Calu3 (cell line): ENCODE measurements at regions of chr17 and their contacts with region 1.

Region 1: GRCh38 chr17:39461113-39461925 is at the start of gene CDK12:
- DNase-seq: peak; percentile 100
- H3K4me3 Mint-ChIP-seq: peak within 1 kb of the TSS; percentile 79
- H3K27ac Mint-ChIP-seq: peak within 1 kb of the TSS; percentile 92
- H3K4me1 Mint-ChIP-seq: peaks cover 20% of the 10 kb centered on the region
- H3K27me3 Mint-ChIP-seq: no peaks in the 10 kb centered on the region
- CTCF ChIP-seq: no peak
- total RNA-seq, gene CDK12: 321 and 329 TPM in 2 replicates

Region 2: GRCh38 chr17:38809828-38810227 is 651.5 kb before region 1 on chr17:
- CTCF ChIA-PET with region 1: no interaction called
- intact Hi-C with region 1: no loop called
- DNase-seq: no peak
- H3K4me3 Mint-ChIP-seq: no peak overlapping the region
- H3K27ac Mint-ChIP-seq: no peak overlapping the region
- H3K4me1 Mint-ChIP-seq: no peaks in the 10 kb centered on the region
- H3K27me3 Mint-ChIP-seq: no peaks in the 10 kb centered on the region
- CTCF ChIP-seq: no peak

Region 3: DNA sequence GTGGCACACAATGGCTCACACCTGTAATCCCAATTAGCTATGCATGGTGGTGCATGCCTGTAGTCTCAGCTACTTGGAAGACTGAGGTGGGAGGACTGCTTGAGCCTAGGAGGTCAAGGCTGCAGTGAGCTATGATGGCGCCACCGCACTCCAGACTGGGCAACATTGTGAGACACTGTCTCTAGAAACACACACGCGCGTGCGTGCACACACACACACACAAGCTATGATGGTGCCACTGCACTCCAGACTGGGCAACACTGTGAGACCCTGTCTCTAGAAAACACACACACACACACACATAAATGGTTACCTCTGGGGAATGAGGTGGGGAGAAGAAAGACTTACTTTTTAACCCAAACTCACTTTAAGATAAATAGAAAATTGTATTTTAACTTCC is 76.3 kb before region 1 on chr17:
- CTCF ChIA-PET with region 1: no interaction called
- intact Hi-C with region 1: no loop called
- DNase-seq: no peak
- H3K4me3 Mint-ChIP-seq: no peak overlapping the region
- H3K27ac Mint-ChIP-seq: no peak overlapping the region
- H3K4me1 Mint-ChIP-seq: no peaks in the 10 kb centered on the region
- H3K27me3 Mint-ChIP-seq: no peaks in the 10 kb centered on the region
- CTCF ChIP-seq: no peak

Region 4: GRCh38 chr17:39401412-39402243 is 59.7 kb before region 1 on chr17 and contains the start of gene FBXL20:
- CTCF ChIA-PET with region 1: interaction called, 25 read pairs
- intact Hi-C with region 1: no loop called
- DNase-seq: peak; percentile 100
- H3K4me3 Mint-ChIP-seq: peak within 1 kb of the TSS; percentile 89
- H3K27ac Mint-ChIP-seq: peak within 1 kb of the TSS; percentile 98
- H3K4me1 Mint-ChIP-seq: peaks cover 40% of the 10 kb centered on the region
- H3K27me3 Mint-ChIP-seq: no peaks in the 10 kb centered on the region
- CTCF ChIP-seq: no peak
- total RNA-seq, gene FBXL20: 70.3 and 71.5 TPM in 2 replicates

Region 5: DNA sequence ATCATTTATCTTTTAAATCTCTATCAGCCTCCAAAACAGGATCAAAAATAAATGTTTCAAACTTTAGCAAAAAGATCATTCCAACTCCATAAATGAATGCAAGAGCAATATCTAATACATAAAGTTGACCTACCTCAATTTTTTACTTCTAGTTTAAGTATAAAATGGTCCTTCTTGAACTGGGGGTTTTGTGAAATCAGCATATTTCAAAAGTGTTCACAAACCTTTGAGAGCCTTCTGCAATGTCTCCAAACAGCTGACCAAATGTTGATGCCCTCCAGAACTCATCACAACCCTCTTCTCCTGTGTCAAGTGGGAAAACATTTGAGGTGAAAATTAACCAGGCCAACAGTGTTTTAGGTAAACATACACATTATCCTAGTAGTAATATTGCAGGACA is 18.0 kb before region 1 on chr17:
- CTCF ChIA-PET with region 1: interaction called, 16 read pairs
- intact Hi-C with region 1: no loop called
- DNase-seq: no peak
- H3K4me3 Mint-ChIP-seq: no peak overlapping the region
- H3K27ac Mint-ChIP-seq: no peak overlapping the region
- H3K4me1 Mint-ChIP-seq: peaks cover 7% of the 10 kb centered on the region
- H3K27me3 Mint-ChIP-seq: no peaks in the 10 kb centered on the region
- CTCF ChIP-seq: no peak

Region 6: GRCh38 chr17:39473310-39473709 is 12.0 kb after region 1 on chr17:
- CTCF ChIA-PET with region 1: interaction called, 30 read pairs
- intact Hi-C with region 1: no loop called
- DNase-seq: no peak
- H3K4me3 Mint-ChIP-seq: no peak overlapping the region
- H3K27ac Mint-ChIP-seq: no peak overlapping the region
- H3K4me1 Mint-ChIP-seq: no peaks in the 10 kb centered on the region
- H3K27me3 Mint-ChIP-seq: no peaks in the 10 kb centered on the region
- CTCF ChIP-seq: no peak

Region 7: DNA sequence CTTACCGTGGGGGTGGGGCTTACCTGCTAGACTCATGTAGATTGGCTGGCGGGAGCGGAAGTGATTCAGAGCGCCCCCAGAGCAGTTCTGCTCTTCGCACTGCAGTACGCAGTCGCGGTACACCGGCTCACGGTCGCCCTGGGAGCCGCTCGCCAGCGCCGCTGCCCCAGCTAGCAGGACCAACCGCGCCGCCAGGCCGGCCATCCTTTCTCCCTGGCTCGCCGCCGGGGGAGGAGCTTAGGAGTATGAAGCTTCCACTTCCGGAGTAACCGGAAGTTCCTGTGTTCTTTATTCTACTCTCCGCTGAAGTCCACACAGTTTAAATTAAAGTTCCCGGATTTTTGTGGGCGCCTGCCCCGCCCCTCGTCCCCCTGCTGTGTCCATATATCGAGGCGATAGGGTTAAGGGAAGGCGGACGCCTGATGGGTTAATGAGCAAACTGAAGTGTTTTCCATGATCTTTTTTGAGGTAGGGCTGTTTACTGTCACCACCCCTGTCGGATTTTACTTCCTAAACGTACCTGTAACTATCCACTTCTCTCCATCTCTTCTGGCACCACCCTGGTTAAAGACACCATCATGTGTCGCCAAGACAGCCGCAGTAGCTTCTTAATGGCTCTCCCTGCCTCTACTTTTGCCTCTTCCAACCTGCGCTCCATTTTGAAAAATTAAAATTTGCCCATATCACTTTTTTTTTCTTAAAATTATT is 226.6 kb after region 1 on chr17 and contains the start of gene PGAP3:
- CTCF ChIA-PET with region 1: interaction called, 6 read pairs
- intact Hi-C with region 1: loop called (anchors 10 kb)
- DNase-seq: peak; percentile 100
- H3K4me3 Mint-ChIP-seq: peak within 1 kb of the TSS; percentile 64
- H3K27ac Mint-ChIP-seq: peak within 1 kb of the TSS; percentile 63
- H3K4me1 Mint-ChIP-seq: peaks cover 27% of the 10 kb centered on the region
- H3K27me3 Mint-ChIP-seq: no peaks in the 10 kb centered on the region
- CTCF ChIP-seq: no peak
- total RNA-seq, gene PGAP3: 1,186 and 1,276 TPM in 2 replicates